ENCODE measurements at regions of chr12 and their contacts with region 1.

Region 1: GRCh38 chr12:3202734-3203446 is 125.7 kb downstream of the TSPAN9 start:
- DNase-seq: no peak
- H3K4me3 ChIP-seq: no peak overlapping the region
- CTCF ChIP-seq: peak; percentile 90

Region 2: GRCh38 chr12:2613326-2614073 is 589.4 kb before region 1 on chr12:
- CTCF ChIA-PET with region 1: no interaction called
- POLR2A ChIA-PET with region 1: no interaction called
- DNase-seq: peak; percentile 90
- H3K4me3 ChIP-seq: no peak overlapping the region
- CTCF ChIP-seq: no peak

Region 3: GRCh38 chr12:3097186-3097804 is 105.6 kb before region 1 on chr12:
- CTCF ChIA-PET with region 1: no interaction called
- POLR2A ChIA-PET with region 1: no interaction called
- DNase-seq: no peak
- H3K4me3 ChIP-seq: no peak overlapping the region
- CTCF ChIP-seq: no peak

Region 4: DNA sequence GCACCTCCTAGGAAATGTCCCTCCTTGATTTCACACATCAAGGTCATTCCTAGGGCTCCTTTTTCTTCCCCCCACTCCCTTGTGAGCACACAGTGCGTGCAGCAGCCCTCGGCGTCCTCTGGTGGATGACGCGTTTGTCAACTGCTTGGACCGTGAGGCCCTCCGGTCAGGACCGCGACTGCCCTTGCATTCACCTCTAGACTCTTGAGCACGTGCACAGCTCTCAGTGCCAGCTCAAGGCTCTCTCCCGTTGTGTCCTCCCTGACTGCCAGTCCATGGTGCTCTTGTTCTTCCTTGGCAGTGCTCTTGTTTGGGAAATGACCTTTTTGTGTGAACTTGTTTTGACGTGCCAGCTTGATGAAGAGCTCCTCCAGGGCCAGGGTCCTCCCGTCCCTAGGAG is 57.9 kb before region 1 on chr12:
- CTCF ChIA-PET with region 1: interaction called, 17 read pairs
- POLR2A ChIA-PET with region 1: no interaction called
- DNase-seq: no peak
- H3K4me3 ChIP-seq: no peak overlapping the region
- CTCF ChIP-seq: no peak

Region 5: DNA sequence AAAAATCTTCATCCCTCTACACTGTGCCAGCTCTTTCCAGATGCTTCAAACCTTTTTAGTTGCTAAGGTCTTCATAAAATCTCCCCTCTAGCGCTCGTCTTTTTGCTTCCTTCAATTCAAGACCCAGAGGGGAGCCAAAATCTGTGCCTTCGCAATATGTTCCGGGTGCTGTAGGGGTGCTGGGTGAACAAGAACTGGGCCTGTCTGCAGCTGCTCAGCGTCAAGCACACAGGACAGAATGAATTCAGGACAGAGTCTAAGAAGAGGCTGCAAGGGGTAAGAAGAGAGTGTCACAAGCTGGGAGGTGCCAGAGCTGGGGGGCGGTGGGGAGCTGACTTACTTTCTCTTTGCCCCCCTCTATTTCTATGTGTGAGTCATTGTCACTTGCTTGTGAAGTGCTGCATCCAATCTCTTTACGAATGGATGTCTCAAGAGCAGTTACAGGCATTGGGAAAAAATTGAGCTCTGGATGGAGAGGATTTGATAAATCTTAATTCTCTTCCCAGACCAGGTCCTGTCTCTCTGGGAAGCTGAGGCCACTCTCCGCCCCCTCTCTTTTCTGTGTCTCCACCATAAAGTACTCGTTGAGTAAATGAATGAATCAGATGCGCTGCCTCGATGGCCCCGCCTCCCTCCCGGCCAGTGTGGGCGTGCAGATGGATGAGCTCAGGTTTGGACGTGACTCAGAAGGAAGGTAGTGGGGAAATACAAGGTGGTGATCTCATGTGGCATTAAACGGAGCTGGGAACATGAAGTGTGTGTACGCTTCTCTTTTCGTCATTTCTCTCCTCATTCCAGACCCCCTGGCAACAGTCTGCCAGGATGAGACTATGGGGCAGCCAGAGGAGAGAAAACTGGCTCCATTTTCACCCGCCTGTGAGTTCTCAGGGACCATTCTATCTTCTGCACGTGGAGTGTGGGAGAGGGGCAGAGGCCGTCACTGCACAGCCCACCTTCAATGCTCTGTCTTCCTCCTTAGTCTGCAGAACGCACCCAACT is 34.4 kb before region 1 on chr12:
- CTCF ChIA-PET with region 1: interaction called, 42 read pairs
- POLR2A ChIA-PET with region 1: no interaction called
- DNase-seq: peak; percentile 79
- H3K4me3 ChIP-seq: no peak overlapping the region; the same call in 1 of the 2 replicates
- CTCF ChIP-seq: no peak

Region 6: GRCh38 chr12:3186546-3187215 is 16.2 kb before region 1 on chr12:
- CTCF ChIA-PET with region 1: interaction called, 131 read pairs
- POLR2A ChIA-PET with region 1: no interaction called
- DNase-seq: no peak
- H3K4me3 ChIP-seq: no peak overlapping the region
- CTCF ChIP-seq: no peak

Region 7: GRCh38 chr12:3225154-3225795 is 22.4 kb after region 1 on chr12:
- CTCF ChIA-PET with region 1: interaction called, 19 read pairs
- POLR2A ChIA-PET with region 1: no interaction called
- DNase-seq: no peak
- H3K4me3 ChIP-seq: no peak overlapping the region
- CTCF ChIP-seq: no peak

Region 8: GRCh38 chr12:3236345-3237187 is 33.7 kb after region 1 on chr12:
- CTCF ChIA-PET with region 1: interaction called, 28 read pairs
- POLR2A ChIA-PET with region 1: no interaction called
- DNase-seq: no peak
- H3K4me3 ChIP-seq: no peak overlapping the region
- CTCF ChIP-seq: no peak

Region 9: DNA sequence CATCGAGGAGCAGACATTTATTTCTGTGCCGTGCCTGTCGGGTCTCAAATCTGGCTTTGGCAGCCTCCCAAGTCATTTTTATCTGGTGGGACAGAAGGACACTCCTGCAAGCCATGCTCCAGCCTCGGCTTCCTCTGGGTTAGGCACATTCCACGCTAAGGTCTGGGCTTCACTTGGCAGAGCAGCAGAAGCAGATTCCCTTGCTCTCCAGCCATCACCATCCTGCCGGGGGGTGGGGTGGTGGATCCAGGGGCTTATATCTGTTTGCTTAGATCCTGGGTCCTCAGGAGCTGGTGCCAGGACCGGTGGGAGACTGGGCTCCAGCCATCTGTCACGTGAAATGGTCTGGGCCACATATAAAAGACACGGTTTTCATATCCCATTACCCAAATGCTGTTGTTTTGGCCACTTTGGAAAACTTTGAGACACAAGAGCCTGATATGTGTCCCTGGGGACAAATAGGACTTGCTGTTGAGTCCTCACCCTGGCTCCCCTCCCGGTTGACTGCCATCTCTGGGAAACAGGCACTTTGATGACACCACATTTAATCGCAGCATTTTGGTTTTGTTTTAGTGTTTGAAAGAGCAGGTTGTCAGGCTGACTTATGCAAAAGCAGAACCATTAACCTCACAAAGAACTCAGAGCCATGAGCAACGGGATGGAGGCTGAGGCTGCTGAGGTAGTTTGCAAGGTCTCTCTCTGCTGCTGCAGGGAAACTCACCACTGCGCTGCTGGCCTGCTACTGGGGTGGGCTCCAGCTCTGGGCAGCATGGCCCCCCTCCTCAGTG is 218.5 kb after region 1 on chr12:
- CTCF ChIA-PET with region 1: no interaction called
- POLR2A ChIA-PET with region 1: no interaction called
- DNase-seq: no peak
- H3K4me3 ChIP-seq: no peak overlapping the region
- CTCF ChIP-seq: no peak